ENCODE measurements at regions of chr13 and their contacts with region 1.

Region 1: DNA sequence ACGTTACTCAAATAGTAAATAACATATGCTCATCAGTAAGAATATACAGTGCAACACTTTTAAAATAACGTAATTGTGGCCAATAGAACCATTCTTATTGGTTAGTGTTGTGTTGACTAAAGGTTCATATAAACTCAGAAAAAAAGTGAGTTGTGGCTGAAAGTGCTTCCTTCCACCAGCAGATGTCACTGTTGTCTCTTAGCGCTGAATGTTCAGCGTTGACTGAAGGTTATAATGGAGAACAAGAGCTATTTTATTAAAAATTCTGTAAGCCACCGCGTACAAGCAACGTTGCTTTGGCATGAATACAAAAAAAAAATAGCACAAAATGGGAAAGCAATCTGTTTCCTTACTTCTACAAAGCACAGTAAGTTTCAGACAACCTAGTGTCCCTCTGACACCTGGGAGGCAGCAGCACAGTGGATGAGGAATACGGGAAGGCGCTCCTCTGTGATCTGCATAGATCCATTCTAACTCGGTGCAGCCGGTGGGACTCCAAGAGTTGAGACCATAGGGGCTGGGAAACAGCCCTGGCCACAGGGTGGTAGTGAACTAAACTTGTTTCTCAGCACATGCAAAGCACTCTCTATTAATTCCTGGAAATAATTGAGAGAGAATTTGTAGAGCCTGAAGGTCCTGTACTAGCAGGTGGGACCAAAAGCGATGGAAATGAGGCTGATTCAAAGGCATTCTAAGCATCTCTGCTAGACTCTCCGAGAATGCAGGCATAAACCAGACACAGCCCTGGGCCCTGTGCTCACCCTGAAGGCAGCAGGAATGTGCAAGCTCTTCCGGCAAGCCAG is 24.0 kb upstream of the OXGR1 start:
- DNase-seq: peak; percentile 29
- ATAC-seq: peak; percentile 97
- H3K4me3 Mint-ChIP-seq: peak overlapping the region; percentile 52
- H3K27ac Mint-ChIP-seq: no peak overlapping the region
- H3K4me1 Mint-ChIP-seq: peaks cover 8% of the 10 kb centered on the region
- H3K27me3 Mint-ChIP-seq: peaks cover 6% of the 10 kb centered on the region
- CTCF ChIP-seq: peak; percentile 48

Region 2: GRCh38 chr13:97000295-97000925 is 17.8 kb before region 1 on chr13:
- CTCF ChIA-PET with region 1: interaction called, 11 read pairs
- POLR2A ChIA-PET with region 1: no interaction called
- DNase-seq: no peak
- ATAC-seq: peak; percentile 48; the same call in 1 of the 2 replicates
- H3K4me3 Mint-ChIP-seq: no peak overlapping the region
- H3K27ac Mint-ChIP-seq: no peak overlapping the region
- H3K4me1 Mint-ChIP-seq: peaks cover 9% of the 10 kb centered on the region
- H3K27me3 Mint-ChIP-seq: peaks cover 100% of the 10 kb centered on the region
- CTCF ChIP-seq: no peak

Region 3: GRCh38 chr13:97212601-97213040 is 194.4 kb after region 1 on chr13:
- CTCF ChIA-PET with region 1: interaction called, 10 read pairs
- POLR2A ChIA-PET with region 1: no interaction called
- DNase-seq: peak; percentile 12
- ATAC-seq: peak; percentile 71
- H3K4me3 Mint-ChIP-seq: no peak overlapping the region
- H3K27ac Mint-ChIP-seq: no peak overlapping the region
- H3K4me1 Mint-ChIP-seq: no peaks in the 10 kb centered on the region
- H3K27me3 Mint-ChIP-seq: peaks cover 43% of the 10 kb centered on the region
- CTCF ChIP-seq: no peak

Measured in WTC11 (cell line).